K562 (cell line): ENCODE measurements at regions of chr17 and their contacts with region 1.

Region 1: DNA sequence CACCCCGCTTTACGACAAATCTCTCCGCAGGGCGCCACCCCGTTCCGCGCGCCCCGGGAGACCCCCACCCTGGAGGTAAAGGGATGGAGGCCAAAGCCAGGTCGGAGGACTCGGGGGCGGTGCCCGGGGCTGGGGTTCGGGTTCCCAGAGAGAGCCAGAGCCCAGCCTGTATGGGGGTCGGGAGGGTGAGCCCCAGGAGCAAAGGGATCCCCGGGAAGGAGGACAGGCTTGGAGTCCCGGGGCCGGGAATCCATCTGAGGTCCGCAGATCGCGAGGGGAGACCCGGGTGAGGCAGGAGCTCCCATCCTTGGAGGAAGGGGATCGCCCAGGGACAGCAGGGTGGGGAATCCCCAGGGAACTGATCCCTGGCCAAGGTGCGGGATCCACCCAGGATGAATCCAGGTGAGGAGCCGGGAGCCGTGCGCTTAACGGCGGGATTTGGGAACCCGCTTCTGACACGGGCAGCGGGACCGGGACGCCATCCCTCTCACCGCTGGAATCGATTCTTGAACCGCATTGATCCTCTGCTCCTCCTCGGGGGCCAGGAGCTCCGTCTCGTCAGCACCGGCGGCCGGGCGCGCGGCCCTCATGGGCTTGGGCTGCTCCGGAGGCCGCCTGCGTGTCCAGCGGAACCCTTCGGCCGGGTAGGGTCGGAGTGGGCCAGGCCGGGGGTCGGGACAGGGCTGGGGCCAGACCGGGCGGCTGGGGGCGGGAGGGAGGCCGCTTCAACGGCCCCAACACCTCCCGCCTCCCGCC is at the start of gene MMD:
- DNase-seq: peak; percentile 20 to 51 (median 45)
- ATAC-seq: peak; percentile 63
- H3K4me3 ChIP-seq: peak within 1 kb of the TSS; percentile 71
- H3K27ac ChIP-seq: peak within 1 kb of the TSS; percentile 64
- H3K4me1 ChIP-seq: peaks cover 11% of the 10 kb centered on the region in 2 experiments
- H3K27me3 ChIP-seq: no peaks in the 10 kb centered on the region
- CTCF ChIP-seq: no peak
- EP300 ChIP-seq: no peak
- POLR2A ChIP-seq: peak; percentile 62; the same call in 1 of the 2 replicates
- RAD21 ChIP-seq: no peak
- polyA plus RNA-seq, gene MMD: 3.1 to 4.0 TPM

Region 2: DNA sequence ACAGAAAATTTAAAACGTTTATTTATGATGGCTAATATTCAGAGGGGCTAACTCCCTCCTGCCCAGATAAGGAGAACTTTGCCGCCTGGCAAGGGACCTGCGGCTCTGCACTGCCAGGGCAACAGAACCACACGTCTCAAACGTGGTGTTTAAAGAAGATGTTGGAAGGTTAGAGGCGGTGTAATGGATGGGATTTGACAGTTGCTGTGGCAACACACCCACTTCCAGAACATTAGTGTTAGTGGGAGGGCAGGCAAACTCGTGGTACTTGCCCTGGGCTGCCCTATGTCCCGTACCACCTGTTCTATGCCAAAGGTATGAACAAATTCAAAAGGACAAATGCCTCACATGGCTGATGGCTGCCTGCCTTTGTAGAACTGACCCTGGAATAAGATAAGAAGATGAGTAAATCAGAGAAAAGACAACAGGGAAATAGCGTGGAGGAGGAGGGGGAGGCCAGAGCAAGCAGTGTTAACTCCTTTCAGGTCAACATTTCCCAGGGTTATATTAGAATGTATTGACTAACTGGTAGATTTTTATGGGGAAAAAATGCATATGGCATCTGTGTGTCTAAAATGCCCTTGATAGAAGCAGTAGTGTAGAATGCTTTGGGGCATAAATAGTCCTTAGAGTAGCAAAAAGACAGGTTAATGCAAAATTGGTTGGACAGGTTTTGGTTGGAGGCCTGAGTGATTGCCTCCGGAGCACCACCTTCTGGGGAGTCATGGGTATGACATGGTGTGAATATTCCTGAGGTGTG is 125.8 kb before region 1 on chr17:
- CTCF ChIA-PET with region 1: no interaction called
- POLR2A ChIA-PET with region 1: no interaction called
- in situ Hi-C with region 1: no loop called
- intact Hi-C with region 1: no loop called
- DNase-seq: peak; percentile 71 to 82 (median 78)
- ATAC-seq: peak; percentile 96
- H3K4me3 ChIP-seq: no peak overlapping the region
- H3K27ac ChIP-seq: no peak overlapping the region
- H3K4me1 ChIP-seq: no peaks in the 10 kb centered on the region
- H3K27me3 ChIP-seq: peaks cover 0 to 4% of the 10 kb centered on the region in 2 experiments; a peak in 1 of 5 replicates
- CTCF ChIP-seq: peak; percentile 75 to 82 (median 80)
- EP300 ChIP-seq: no peak
- POLR2A ChIP-seq: no peak
- RAD21 ChIP-seq: peak; percentile 66 to 82

Region 3: DNA sequence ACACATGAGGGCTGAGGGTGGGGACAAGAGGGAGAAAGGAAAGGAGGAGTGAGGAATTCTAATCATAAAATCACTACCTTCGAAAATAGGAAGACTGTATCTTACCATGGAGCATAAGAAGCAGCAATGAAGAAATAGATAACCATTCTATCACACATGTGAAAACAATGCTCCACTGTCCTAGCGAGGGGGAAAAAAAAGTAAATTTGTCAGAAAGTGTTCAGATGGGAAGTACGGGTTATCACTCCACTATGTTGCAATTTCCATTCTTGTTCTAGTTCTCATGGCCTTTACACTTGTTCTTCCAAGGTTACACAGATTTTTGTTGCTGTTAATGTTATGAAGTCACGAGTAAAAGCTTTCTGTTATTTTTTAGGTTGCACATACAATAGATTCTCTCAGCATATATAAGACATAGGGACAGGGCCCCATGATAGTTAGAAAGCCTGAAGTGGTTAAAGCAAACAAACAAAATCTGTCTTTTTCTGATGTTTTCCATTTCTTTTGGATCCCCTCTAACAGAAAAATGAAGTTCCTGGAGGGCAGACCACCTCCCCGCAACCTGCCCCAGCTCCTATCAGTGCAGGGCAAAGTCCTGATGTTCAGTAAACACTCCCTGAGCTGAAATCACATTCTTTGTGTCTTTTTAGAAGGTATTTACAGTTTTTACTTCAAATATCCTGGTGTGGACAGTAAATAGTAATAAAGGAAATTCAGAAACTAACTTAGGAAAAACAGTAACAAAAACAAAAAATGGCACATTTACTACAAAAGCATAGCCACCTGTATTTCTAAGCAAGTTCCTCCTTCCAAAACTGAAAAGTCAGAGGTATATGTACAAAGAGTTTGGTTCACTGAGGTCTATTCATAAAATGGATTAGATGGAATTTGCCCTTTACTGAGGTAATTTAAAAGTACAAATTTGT is 13.5 kb before region 1 on chr17:
- CTCF ChIA-PET with region 1: no interaction called
- POLR2A ChIA-PET with region 1: interaction called, 10 read pairs
- in situ Hi-C with region 1: no loop called
- intact Hi-C with region 1: no loop called
- DNase-seq: no peak
- ATAC-seq: no peak
- H3K4me3 ChIP-seq: no peak overlapping the region
- H3K27ac ChIP-seq: no peak overlapping the region
- H3K4me1 ChIP-seq: no peaks in the 10 kb centered on the region
- H3K27me3 ChIP-seq: no peaks in the 10 kb centered on the region
- CTCF ChIP-seq: no peak
- EP300 ChIP-seq: no peak
- POLR2A ChIP-seq: no peak
- RAD21 ChIP-seq: no peak

Region 4: DNA sequence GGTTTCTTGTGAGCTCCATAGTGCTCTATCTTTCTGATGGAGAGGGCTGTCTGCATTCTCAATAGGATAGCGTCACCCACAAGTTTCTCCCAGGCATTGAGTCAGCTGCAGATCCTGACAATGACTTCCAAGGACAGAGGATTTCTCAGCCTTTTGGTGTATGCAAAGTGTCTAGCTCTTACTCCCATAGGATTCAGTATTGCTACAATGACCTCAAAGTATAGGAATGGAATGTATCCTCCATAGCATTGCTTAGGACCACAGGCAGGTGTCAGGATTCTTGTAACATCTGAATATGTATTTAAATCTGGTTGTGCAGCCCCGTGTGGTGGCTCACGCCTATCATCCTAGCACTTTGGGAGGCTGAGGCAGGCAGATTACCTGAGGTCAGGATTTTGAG is 57.6 kb after region 1 on chr17:
- CTCF ChIA-PET with region 1: no interaction called
- POLR2A ChIA-PET with region 1: no interaction called
- in situ Hi-C with region 1: no loop called
- intact Hi-C with region 1: no loop called
- DNase-seq: no peak
- ATAC-seq: no peak
- H3K4me3 ChIP-seq: no peak overlapping the region
- H3K27ac ChIP-seq: no peak overlapping the region
- H3K4me1 ChIP-seq: no peaks in the 10 kb centered on the region; a peak in 3 of 5 replicates
- H3K27me3 ChIP-seq: no peaks in the 10 kb centered on the region
- CTCF ChIP-seq: no peak
- EP300 ChIP-seq: no peak
- POLR2A ChIP-seq: no peak
- RAD21 ChIP-seq: no peak

Region 5: GRCh38 chr17:55496094-55496881 is 74.9 kb after region 1 on chr17:
- CTCF ChIA-PET with region 1: no interaction called
- POLR2A ChIA-PET with region 1: interaction called, 3 read pairs
- in situ Hi-C with region 1: no loop called
- intact Hi-C with region 1: loop called (anchors 5 kb)
- DNase-seq: peak in 2 of 4 experiments; percentile 23 to 48
- ATAC-seq: peak; percentile 82
- H3K4me3 ChIP-seq: no peak overlapping the region
- H3K27ac ChIP-seq: peak overlapping the region; percentile 8; the same call in 1 of the 3 replicates
- H3K4me1 ChIP-seq: peaks cover 0 to 4% of the 10 kb centered on the region in 2 experiments; a peak in 1 of 5 replicates
- H3K27me3 ChIP-seq: no peaks in the 10 kb centered on the region; a peak in 1 of 5 replicates
- CTCF ChIP-seq: peak in 1 of 3 experiments; percentile 46; a peak in 2 of 6 replicates
- EP300 ChIP-seq: peak; percentile 51; the same call in 1 of the 2 replicates
- POLR2A ChIP-seq: no peak
- RAD21 ChIP-seq: peak; percentile 53 to 70

Region 6: GRCh38 chr17:55641676-55642081 is 220.3 kb after region 1 on chr17:
- CTCF ChIA-PET with region 1: no interaction called
- POLR2A ChIA-PET with region 1: no interaction called
- in situ Hi-C with region 1: no loop called
- intact Hi-C with region 1: no loop called
- DNase-seq: peak; percentile 17 to 70 (median 24)
- ATAC-seq: peak; percentile 92
- H3K4me3 ChIP-seq: no peak overlapping the region
- H3K27ac ChIP-seq: no peak overlapping the region
- H3K4me1 ChIP-seq: peaks cover 0 to 4% of the 10 kb centered on the region in 2 experiments; a peak in 2 of 5 replicates
- H3K27me3 ChIP-seq: no peaks in the 10 kb centered on the region
- CTCF ChIP-seq: peak; percentile 67 to 74 (median 72)
- EP300 ChIP-seq: no peak
- POLR2A ChIP-seq: no peak
- RAD21 ChIP-seq: peak; percentile 74 to 76